Activated CD4-positive, alpha-beta T cell treated with anti-CD3 and anti-CD28 coated beads for 36 hours (primary cell): ENCODE measurements at regions of chr5 and their contacts with region 1.

Region 1: DNA sequence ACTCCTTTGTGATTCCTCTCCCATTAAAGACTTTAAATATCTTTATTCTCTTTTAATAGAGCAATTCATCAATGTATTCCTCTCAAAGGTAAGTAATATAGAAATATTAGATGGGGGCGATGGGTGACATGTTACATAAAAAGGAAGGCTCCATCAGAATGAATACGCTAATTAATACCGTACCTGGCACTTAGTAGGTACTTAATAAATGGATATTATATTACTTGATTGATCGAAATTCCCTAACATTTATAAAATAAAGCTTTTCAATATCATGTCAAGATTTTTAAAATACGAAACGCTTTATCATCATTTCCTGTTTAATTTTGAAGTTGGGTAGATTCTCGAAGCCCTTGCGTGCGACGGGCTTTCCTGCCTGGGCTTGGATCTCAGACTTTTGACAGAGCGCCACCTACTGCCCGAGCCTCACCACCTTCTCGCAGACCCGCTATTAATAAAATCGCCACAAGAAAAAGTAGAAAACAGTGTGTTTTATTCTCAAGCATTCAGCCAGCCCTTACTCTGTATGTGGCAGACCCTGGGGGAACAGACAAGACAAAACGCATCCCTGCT is 99.4 kb downstream of the C5orf15 start:
- DNase-seq: peak; percentile 92
- ATAC-seq: peak; percentile 75
- H3K4me3 Mint-ChIP-seq: no peak overlapping the region
- H3K27ac Mint-ChIP-seq: peak overlapping the region; percentile 68
- H3K4me1 Mint-ChIP-seq: peaks cover 29% of the 10 kb centered on the region
- H3K27me3 Mint-ChIP-seq: peaks cover 7% of the 10 kb centered on the region

Region 2: GRCh38 chr5:133111299-133111698 is 757.7 kb before region 1 on chr5:
- CTCF ChIA-PET with region 1: no interaction called
- POLR2A ChIA-PET with region 1: no interaction called
- intact Hi-C with region 1: loop called in 1 of 2 experiments (anchors 1 kb)
- DNase-seq: peak; percentile 91
- ATAC-seq: peak; percentile 64
- H3K4me3 Mint-ChIP-seq: no peak overlapping the region
- H3K27ac Mint-ChIP-seq: no peak overlapping the region
- H3K4me1 Mint-ChIP-seq: peaks cover 29% of the 10 kb centered on the region
- H3K27me3 Mint-ChIP-seq: no peaks in the 10 kb centered on the region

Region 3: DNA sequence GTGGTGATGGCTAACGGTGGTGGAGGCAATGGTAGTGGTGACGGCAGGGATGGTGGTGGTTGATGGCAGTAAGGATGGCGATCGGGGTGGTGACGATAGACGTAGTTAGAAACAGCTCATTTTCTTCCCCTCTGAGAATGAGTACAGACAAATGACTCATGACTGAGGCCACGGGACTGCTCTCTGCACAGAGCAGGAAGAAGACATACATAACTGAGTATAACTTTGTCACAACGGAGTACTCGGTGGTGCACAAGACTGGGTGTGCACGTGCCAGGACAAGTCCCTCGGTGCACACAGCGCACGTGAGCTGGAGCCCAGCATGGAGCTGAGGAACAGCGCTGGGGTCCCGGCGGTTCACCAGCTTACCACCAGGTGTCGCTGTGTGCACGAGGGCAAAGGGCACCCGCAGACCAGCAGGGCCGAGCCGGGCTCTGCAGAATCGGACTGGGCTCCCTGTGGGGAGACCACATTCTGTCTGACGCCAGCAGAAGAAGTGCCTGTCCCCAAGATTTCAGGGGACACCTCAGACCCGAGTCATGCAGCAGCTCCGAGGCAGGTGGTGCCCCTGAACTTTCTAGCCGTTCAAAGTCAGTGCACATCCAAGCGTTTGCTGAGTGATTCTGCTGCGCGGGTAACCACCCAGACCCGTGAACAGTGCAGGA is 445.3 kb before region 1 on chr5:
- CTCF ChIA-PET with region 1: interaction called, 6 read pairs
- POLR2A ChIA-PET with region 1: no interaction called
- intact Hi-C with region 1: loop called in 1 of 2 experiments (anchors 2 kb)
- DNase-seq: peak; percentile 87
- ATAC-seq: peak; percentile 96
- H3K4me3 Mint-ChIP-seq: no peak overlapping the region
- H3K27ac Mint-ChIP-seq: peak overlapping the region; percentile 26
- H3K4me1 Mint-ChIP-seq: peaks cover 9% of the 10 kb centered on the region
- H3K27me3 Mint-ChIP-seq: peaks cover 13% of the 10 kb centered on the region

Region 4: DNA sequence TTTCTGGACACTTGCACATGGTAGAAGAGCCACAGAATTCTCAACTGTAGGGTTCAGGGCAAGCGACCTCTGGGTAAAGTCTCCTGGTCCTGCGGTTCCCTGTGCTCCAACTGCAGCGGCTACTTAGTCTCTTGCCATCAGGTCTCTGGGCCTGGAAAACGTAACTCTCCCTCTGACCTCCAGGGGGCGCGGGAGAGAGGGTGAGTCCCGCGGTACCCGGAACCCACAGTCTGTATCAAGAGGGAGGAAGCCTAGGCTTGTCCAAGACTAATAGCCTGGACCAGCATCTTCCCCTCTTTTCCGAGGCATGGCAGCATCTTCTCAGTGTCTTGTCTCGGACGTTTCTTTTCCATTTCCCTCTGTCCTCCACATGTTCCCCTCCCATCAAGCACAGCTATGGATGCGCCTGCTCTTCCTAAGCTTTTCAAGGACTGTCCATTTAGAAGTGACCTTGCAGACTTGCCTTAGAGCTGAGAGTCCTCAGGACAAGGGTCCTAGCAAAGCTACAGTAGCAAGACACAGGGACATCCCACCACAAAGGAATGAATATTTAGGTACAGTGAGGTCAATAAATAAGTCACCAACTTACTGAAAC is 316.0 kb before region 1 on chr5:
- CTCF ChIA-PET with region 1: interaction called, 4 read pairs
- POLR2A ChIA-PET with region 1: no interaction called
- intact Hi-C with region 1: loop called (anchors 1 to 10 kb)
- DNase-seq: peak; percentile 78
- ATAC-seq: peak; percentile 80
- H3K4me3 Mint-ChIP-seq: no peak overlapping the region
- H3K27ac Mint-ChIP-seq: no peak overlapping the region
- H3K4me1 Mint-ChIP-seq: no peaks in the 10 kb centered on the region
- H3K27me3 Mint-ChIP-seq: peaks cover 24% of the 10 kb centered on the region

Region 5: DNA sequence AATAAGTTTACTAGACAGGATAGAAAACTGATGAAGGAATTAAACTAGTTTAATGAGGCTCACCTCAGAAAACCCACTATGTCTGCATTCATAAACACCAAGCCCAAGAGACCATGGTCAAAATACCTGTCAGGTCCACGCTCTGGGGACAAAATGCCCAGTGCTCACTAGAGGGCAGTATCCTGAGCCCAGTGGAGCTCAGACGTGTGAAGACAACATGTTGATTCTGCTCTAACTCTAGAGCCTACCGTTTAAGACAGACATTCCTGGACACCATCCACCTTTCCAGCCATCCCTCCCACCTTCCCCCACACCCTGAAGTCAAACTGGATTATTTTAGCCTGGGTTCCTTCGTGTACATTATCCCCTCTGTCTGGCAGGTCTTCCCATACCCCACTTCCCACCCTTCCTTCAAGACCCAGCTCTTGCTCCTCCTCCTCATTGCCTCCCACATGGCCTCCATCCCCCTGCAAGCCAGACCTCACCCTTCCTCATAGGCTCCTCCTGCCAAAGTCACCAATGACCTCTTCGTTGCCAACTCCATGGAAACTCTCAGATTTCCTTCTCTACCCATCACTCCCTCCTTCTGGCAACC is 114.4 kb before region 1 on chr5:
- CTCF ChIA-PET with region 1: interaction called, 7 read pairs
- POLR2A ChIA-PET with region 1: no interaction called
- intact Hi-C with region 1: loop called in 1 of 2 experiments (anchors 2 kb)
- DNase-seq: peak; percentile 56
- ATAC-seq: peak; percentile 54
- H3K4me3 Mint-ChIP-seq: no peak overlapping the region
- H3K27ac Mint-ChIP-seq: no peak overlapping the region
- H3K4me1 Mint-ChIP-seq: no peaks in the 10 kb centered on the region
- H3K27me3 Mint-ChIP-seq: peaks cover 19% of the 10 kb centered on the region

Region 6: GRCh38 chr5:133930061-133930812 is 61.2 kb after region 1 on chr5:
- CTCF ChIA-PET with region 1: interaction called, 7 read pairs
- POLR2A ChIA-PET with region 1: no interaction called
- intact Hi-C with region 1: loop called (anchors 1 to 2 kb)
- DNase-seq: peak; percentile 89
- ATAC-seq: peak; percentile 84
- H3K4me3 Mint-ChIP-seq: peak overlapping the region; percentile 74
- H3K27ac Mint-ChIP-seq: peak overlapping the region; percentile 99
- H3K4me1 Mint-ChIP-seq: peaks cover 61% of the 10 kb centered on the region
- H3K27me3 Mint-ChIP-seq: no peaks in the 10 kb centered on the region

Region 7: GRCh38 chr5:134140530-134141201 is 271.6 kb after region 1 on chr5:
- CTCF ChIA-PET with region 1: no interaction called
- POLR2A ChIA-PET with region 1: no interaction called
- intact Hi-C with region 1: loop called in 1 of 2 experiments (anchors 10 kb)
- DNase-seq: peak; percentile 82
- ATAC-seq: peak; percentile 42
- H3K4me3 Mint-ChIP-seq: no peak overlapping the region
- H3K27ac Mint-ChIP-seq: no peak overlapping the region
- H3K4me1 Mint-ChIP-seq: peaks cover 69% of the 10 kb centered on the region
- H3K27me3 Mint-ChIP-seq: no peaks in the 10 kb centered on the region

Region 8: GRCh38 chr5:134215757-134216156 is 346.7 kb after region 1 on chr5:
- CTCF ChIA-PET with region 1: no interaction called
- POLR2A ChIA-PET with region 1: no interaction called
- intact Hi-C with region 1: no loop called
- DNase-seq: no peak
- ATAC-seq: no peak
- H3K4me3 Mint-ChIP-seq: no peak overlapping the region
- H3K27ac Mint-ChIP-seq: peak overlapping the region; percentile 37
- H3K4me1 Mint-ChIP-seq: peaks cover 64% of the 10 kb centered on the region
- H3K27me3 Mint-ChIP-seq: no peaks in the 10 kb centered on the region